K562 (cell line): ENCODE measurements at regions of chr20 and their contacts with region 1.

Region 1: DNA sequence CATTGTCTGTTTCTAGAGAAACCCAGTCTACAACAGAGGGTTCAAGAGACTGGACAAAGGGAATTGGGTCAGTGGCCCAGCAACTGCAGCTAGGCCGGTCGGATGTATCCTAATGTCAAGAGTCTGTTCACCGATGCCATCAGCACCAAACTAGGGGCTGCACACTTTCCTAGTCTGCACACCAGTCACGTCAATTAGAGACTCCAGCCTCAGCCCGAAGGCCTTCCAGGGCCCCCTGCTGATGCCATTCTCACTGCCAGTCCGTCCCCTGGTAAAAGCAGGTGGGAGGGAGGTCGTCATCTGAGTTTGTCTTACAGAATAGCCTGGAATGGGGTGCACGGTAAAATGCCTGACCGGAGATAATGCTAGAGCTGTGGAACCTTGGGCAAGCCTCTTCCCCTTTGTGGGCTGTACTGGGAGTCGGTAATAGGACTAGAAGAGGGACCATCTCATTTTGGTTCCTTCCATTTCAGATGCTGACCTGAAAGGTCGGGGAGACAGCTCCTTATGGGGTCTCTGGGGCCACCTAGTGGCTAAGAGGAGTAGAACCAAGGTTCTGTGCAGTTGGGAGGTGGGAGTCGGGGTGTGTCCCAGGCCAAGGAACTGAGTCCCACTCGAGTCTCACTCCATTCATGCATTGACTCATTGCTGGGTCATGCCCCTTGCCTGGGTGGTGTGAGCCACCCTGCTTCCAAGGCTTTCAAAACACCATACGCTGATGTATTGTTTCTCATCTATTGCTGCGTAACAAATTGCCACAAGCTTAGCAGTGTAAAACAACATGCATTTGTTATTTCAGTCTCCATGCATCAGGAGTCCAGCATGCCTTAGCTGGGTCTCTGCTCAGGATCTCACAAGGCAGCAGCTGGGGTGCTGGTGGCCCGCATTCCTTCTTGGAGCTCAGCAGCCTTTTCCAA is 5.1 kb downstream of the SOX12 start:
- DNase-seq: peak; percentile 58 to 78 (median 62)
- ATAC-seq: peak; percentile 59
- H3K4me3 ChIP-seq: no peak overlapping the region
- H3K27ac ChIP-seq: peak overlapping the region; percentile 19; the same call in 1 of the 3 replicates
- H3K4me1 ChIP-seq: peaks cover 16 to 43% of the 10 kb centered on the region in 2 experiments; a peak in 4 of 5 replicates
- H3K27me3 ChIP-seq: no peaks in the 10 kb centered on the region
- CTCF ChIP-seq: peak; percentile 66 to 87 (median 84)
- EP300 ChIP-seq: no peak
- POLR2A ChIP-seq: no peak
- RAD21 ChIP-seq: peak; percentile 52 to 78

Region 2: GRCh38 chr20:208942-209566 is 121.4 kb before region 1 on chr20:
- CTCF ChIA-PET with region 1: no interaction called
- POLR2A ChIA-PET with region 1: no interaction called
- in situ Hi-C with region 1: no loop called
- intact Hi-C with region 1: loop called (anchors 1 kb)
- DNase-seq: peak; percentile 6 to 53 (median 20)
- ATAC-seq: peak; percentile 92
- H3K4me3 ChIP-seq: no peak overlapping the region
- H3K27ac ChIP-seq: no peak overlapping the region
- H3K4me1 ChIP-seq: peaks cover 0 to 2% of the 10 kb centered on the region in 2 experiments; a peak in 1 of 5 replicates
- H3K27me3 ChIP-seq: no peaks in the 10 kb centered on the region; a peak in 2 of 5 replicates
- CTCF ChIP-seq: peak; percentile 53 to 70 (median 63)
- EP300 ChIP-seq: no peak
- POLR2A ChIP-seq: no peak
- RAD21 ChIP-seq: peak; percentile 77 to 82

Region 3: GRCh38 chr20:227439-228105 is 102.9 kb before region 1 on chr20:
- CTCF ChIA-PET with region 1: no interaction called
- POLR2A ChIA-PET with region 1: no interaction called
- in situ Hi-C with region 1: no loop called
- intact Hi-C with region 1: no loop called
- DNase-seq: no peak
- ATAC-seq: no peak
- H3K4me3 ChIP-seq: no peak overlapping the region
- H3K27ac ChIP-seq: no peak overlapping the region
- H3K4me1 ChIP-seq: no peaks in the 10 kb centered on the region; a peak in 1 of 5 replicates
- H3K27me3 ChIP-seq: no peaks in the 10 kb centered on the region
- CTCF ChIP-seq: no peak
- EP300 ChIP-seq: no peak
- POLR2A ChIP-seq: no peak
- RAD21 ChIP-seq: no peak

Region 4: DNA sequence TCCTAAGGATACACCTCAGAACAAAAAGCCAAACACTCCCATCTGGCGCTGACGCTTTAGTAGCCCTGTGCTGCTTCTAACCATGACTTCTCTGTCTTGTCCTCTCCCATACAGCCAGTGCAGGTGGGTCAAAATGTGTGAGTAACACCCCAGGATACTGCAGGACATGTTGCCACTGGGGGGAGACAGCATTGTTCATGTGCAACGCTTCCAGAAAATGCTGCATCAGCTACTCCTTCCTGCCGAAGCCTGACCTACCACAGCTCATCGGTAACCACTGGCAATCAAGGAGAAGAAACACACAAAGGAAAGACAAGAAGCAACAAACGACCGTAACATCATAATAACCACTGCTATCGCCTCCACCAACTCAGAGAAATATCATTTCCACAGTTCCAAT is 71.5 kb before region 1 on chr20:
- CTCF ChIA-PET with region 1: interaction called, 3 read pairs
- POLR2A ChIA-PET with region 1: no interaction called
- in situ Hi-C with region 1: no loop called
- intact Hi-C with region 1: loop called (anchors 2 kb)
- DNase-seq: peak; percentile 18 to 68 (median 48)
- ATAC-seq: peak; percentile 93
- H3K4me3 ChIP-seq: no peak overlapping the region
- H3K27ac ChIP-seq: no peak overlapping the region
- H3K4me1 ChIP-seq: peaks cover 12 to 21% of the 10 kb centered on the region in 2 experiments
- H3K27me3 ChIP-seq: no peaks in the 10 kb centered on the region
- CTCF ChIP-seq: peak; percentile 58 to 64 (median 62)
- EP300 ChIP-seq: no peak
- POLR2A ChIP-seq: no peak
- RAD21 ChIP-seq: peak; percentile 40 to 67; a peak in 3 of 4 replicates

Region 5: GRCh38 chr20:289693-290083 is 40.8 kb before region 1 on chr20:
- CTCF ChIA-PET with region 1: no interaction called
- POLR2A ChIA-PET with region 1: no interaction called
- in situ Hi-C with region 1: no loop called
- intact Hi-C with region 1: loop called (anchors 2 kb)
- DNase-seq: no peak
- ATAC-seq: peak; percentile 37
- H3K4me3 ChIP-seq: peak overlapping the region; percentile 68
- H3K27ac ChIP-seq: peak overlapping the region; percentile 87
- H3K4me1 ChIP-seq: peaks cover 4 to 9% of the 10 kb centered on the region in 2 experiments; a peak in 3 of 5 replicates
- H3K27me3 ChIP-seq: no peaks in the 10 kb centered on the region
- CTCF ChIP-seq: no peak
- EP300 ChIP-seq: no peak
- POLR2A ChIP-seq: no peak
- RAD21 ChIP-seq: no peak